Activated CD8-positive, alpha-beta T cell treated with anti-CD3 and anti-CD28 coated beads, Interleukin-2, amount 10 ng/mL, durations not matched to agents 7 days and 5 days (primary cell): ENCODE measurements at regions of chrX and their contacts with region 1.

Region 1: GRCh38 chrX:48696301-48697181 is at the start of gene SUV39H1:
- DNase-seq: peak; percentile 89
- ATAC-seq: peak; percentile 96
- H3K4me3 Mint-ChIP-seq: peak within 1 kb of the TSS; percentile 83
- H3K27ac Mint-ChIP-seq: peak within 1 kb of the TSS; percentile 97
- H3K4me1 Mint-ChIP-seq: peaks cover 45% of the 10 kb centered on the region
- H3K27me3 Mint-ChIP-seq: no peaks in the 10 kb centered on the region
- total RNA-seq, gene SUV39H1: 33.2 to 35.3 TPM

Region 2: DNA sequence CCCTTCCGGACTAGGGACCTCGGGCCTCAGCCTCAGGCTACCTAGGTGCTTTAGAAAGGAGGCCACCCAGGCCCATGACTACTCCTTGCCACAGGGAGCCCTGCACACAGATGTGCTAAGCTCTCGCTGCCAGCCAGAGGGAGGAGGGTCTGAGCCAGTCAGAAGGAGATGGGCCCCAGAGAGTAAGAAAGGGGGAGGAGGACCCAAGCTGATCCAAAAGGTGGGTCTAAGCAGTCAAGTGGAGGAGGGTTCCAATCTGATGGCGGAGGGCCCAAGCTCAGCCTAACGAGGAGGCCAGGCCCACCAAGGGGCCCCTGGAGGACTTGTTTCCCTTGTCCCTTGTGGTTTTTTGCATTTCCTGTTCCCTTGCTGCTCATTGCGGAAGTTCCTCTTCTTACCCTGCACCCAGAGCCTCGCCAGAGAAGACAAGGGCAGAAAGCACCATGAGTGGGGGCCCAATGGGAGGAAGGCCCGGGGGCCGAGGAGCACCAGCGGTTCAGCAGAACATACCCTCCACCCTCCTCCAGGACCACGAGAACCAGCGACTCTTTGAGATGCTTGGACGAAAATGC is 13.0 kb before region 1 on chrX and contains the start of gene WAS:
- CTCF ChIA-PET with region 1: interaction called, 3 read pairs
- POLR2A ChIA-PET with region 1: interaction called, 22 read pairs
- DNase-seq: peak; percentile 72
- ATAC-seq: peak; percentile 89
- H3K4me3 Mint-ChIP-seq: peak within 1 kb of the TSS; percentile 91
- H3K27ac Mint-ChIP-seq: peak within 1 kb of the TSS; percentile 93
- H3K4me1 Mint-ChIP-seq: peaks cover 63% of the 10 kb centered on the region
- H3K27me3 Mint-ChIP-seq: no peaks in the 10 kb centered on the region
- total RNA-seq, gene WAS: 134 to 164 TPM

Region 3: GRCh38 chrX:48715072-48715471 is 18.5 kb after region 1 on chrX:
- CTCF ChIA-PET with region 1: no interaction called
- POLR2A ChIA-PET with region 1: interaction called, 13 read pairs
- DNase-seq: no peak
- ATAC-seq: no peak
- H3K4me3 Mint-ChIP-seq: no peak overlapping the region
- H3K27ac Mint-ChIP-seq: peak overlapping the region; percentile 71
- H3K4me1 Mint-ChIP-seq: peaks cover 76% of the 10 kb centered on the region
- H3K27me3 Mint-ChIP-seq: no peaks in the 10 kb centered on the region